Activated naive CD4-positive, alpha-beta T cell treated with anti-CD3 and anti-CD28 coated beads for 36 hours (primary cell): ENCODE measurements at regions of chr10 and their contacts with region 1.

Region 1: GRCh38 chr10:114492351-114493037 is 88.2 kb upstream of the AFAP1L2 start:
- DNase-seq: peak; percentile 70
- H3K4me3 Mint-ChIP-seq: peak overlapping the region; percentile 30
- H3K27ac Mint-ChIP-seq: peak overlapping the region; percentile 77
- H3K4me1 Mint-ChIP-seq: peaks cover 84% of the 10 kb centered on the region
- H3K27me3 Mint-ChIP-seq: no peaks in the 10 kb centered on the region

Region 2: GRCh38 chr10:114479307-114479706 is 13.2 kb before region 1 on chr10:
- CTCF ChIA-PET with region 1: interaction called, 10 read pairs
- intact Hi-C with region 1: loop called (anchors 1 kb)
- DNase-seq: no peak
- H3K4me3 Mint-ChIP-seq: no peak overlapping the region
- H3K27ac Mint-ChIP-seq: no peak overlapping the region
- H3K4me1 Mint-ChIP-seq: peaks cover 72% of the 10 kb centered on the region
- H3K27me3 Mint-ChIP-seq: no peaks in the 10 kb centered on the region

Region 3: DNA sequence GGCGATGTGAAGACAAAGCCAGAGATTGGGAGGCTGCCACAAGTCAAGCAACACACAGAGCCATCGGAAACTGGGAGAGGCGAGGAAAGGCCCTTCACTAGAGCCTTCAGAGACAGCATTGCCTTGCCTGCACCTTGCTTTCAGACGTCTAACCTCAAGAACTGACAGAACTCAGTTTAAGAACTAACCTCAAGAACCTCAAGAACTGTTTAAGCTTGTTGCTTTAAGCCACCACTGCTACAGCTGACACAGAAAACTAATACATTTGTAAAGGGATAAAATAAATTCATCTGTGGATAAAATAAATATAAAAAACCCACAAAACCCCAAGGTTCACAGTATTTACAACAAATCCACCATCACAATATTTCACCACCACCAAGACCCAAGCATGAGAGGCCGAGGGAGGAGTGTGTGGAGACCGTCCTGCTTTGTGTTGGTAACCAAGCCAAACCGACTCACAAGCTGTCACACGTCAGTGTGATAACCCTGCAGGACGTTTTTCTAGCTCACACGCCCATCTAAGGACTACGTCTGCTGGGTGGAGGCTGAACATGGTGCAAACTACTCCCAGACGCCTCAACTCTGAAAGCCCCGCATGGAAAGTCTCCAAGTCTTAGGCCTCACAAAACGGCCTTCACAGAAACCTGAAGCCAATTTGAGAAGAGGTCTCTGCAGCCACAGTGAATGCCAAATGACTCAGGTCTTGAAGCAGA is 48.7 kb after region 1 on chr10:
- CTCF ChIA-PET with region 1: interaction called, 14 read pairs
- intact Hi-C with region 1: loop called (anchors 1 kb)
- DNase-seq: peak; percentile 87
- H3K4me3 Mint-ChIP-seq: peak overlapping the region; percentile 69
- H3K27ac Mint-ChIP-seq: peak overlapping the region; percentile 95
- H3K4me1 Mint-ChIP-seq: peaks cover 90% of the 10 kb centered on the region
- H3K27me3 Mint-ChIP-seq: no peaks in the 10 kb centered on the region